PC-9 (cell line): ENCODE measurements at regions of chr1 and their contacts with region 1.

Region 1: GRCh38 chr1:182869241-182869666 is 30.1 kb downstream of the DHX9 start:
- DNase-seq: no peak
- H3K4me3 ChIP-seq: no peak overlapping the region
- H3K27ac ChIP-seq: peak overlapping the region; percentile 18; the same call in 1 of the 2 replicates
- H3K4me1 ChIP-seq: no peaks in the 10 kb centered on the region
- H3K27me3 ChIP-seq: no peaks in the 10 kb centered on the region
- CTCF ChIP-seq: no peak

Region 2: DNA sequence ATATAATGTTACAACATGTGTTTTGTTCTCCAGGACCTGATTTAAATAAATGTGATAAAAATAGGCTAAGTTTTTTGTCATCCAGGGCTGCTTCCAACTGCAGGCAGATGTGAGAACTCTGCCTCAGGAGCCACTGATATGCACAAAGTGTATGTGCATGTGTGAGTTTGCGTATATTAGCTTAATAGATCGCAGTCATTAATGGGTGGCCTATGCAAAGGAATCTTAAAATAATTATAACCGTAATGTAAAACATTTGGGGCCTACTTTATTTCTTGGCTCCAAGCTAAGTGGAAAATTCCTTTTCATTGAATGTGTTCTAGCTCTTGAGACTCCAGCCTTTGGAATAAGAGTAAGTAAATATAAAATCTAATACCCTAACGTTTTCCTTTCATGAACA is 13.3 kb before region 1 on chr1:
- CTCF ChIA-PET with region 1: no interaction called
- POLR2A ChIA-PET with region 1: no interaction called
- intact Hi-C with region 1: loop called (anchors 2 kb)
- DNase-seq: no peak
- H3K4me3 ChIP-seq: no peak overlapping the region
- H3K27ac ChIP-seq: no peak overlapping the region
- H3K4me1 ChIP-seq: no peaks in the 10 kb centered on the region
- H3K27me3 ChIP-seq: no peaks in the 10 kb centered on the region
- CTCF ChIP-seq: no peak

Region 3: GRCh38 chr1:183537405-183537804 is 668.2 kb after region 1 on chr1:
- CTCF ChIA-PET with region 1: no interaction called
- POLR2A ChIA-PET with region 1: no interaction called
- intact Hi-C with region 1: loop called (anchors 10 kb)
- DNase-seq: no peak
- H3K4me3 ChIP-seq: no peak overlapping the region
- H3K27ac ChIP-seq: no peak overlapping the region
- H3K4me1 ChIP-seq: no peaks in the 10 kb centered on the region
- H3K27me3 ChIP-seq: no peaks in the 10 kb centered on the region
- CTCF ChIP-seq: no peak